ENCODE measurements at regions of chr16 and their contacts with region 1.

Region 1: DNA sequence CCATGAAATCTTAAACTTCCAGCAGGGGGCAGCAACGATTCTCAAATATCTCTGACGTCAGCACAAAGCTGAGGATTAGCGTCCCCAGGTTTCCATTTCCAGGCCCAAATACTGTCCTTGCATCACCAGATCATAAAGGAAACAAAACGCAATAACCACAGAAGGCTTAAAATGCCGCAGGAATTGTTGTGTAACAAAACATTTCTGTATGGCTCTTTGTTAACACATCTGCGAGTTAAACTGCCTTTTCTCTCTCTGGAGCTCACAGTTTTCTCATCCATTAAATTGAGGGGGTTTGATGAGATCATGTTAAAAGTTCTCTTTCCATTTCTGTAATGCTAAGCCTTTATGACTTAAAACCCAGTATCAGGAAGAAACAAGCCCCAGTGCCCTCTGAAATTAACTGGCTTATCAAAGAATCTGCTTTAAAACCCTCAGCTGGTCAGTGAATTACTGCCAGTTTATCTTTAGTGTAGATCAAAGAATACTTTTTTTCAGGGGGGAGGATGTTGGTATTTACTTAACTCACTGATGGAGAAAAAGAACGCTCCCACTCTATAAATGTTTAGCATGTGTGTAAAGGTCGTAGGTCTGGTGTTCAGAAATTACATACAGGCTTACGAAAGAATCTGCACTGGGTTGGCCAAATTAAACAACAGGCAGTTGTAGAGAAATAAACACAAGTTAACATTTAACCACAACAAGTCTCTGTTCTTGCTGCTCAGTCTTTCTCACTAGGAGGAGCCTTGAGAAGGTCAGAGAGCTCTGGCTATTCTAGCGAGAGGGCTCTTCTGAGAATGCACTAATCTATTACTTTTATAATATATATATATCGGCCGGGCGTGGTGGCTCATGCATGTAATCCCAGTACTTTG is 10.6 kb upstream of the TERF2 start:
- DNase-seq: peak; percentile 90
- H3K4me3 ChIP-seq: no peak overlapping the region
- H3K27ac ChIP-seq: peak overlapping the region; percentile 65
- H3K4me1 ChIP-seq: peaks cover 18% of the 10 kb centered on the region
- H3K27me3 ChIP-seq: no peaks in the 10 kb centered on the region
- CTCF ChIP-seq: peak; percentile 55 to 57

Region 2: DNA sequence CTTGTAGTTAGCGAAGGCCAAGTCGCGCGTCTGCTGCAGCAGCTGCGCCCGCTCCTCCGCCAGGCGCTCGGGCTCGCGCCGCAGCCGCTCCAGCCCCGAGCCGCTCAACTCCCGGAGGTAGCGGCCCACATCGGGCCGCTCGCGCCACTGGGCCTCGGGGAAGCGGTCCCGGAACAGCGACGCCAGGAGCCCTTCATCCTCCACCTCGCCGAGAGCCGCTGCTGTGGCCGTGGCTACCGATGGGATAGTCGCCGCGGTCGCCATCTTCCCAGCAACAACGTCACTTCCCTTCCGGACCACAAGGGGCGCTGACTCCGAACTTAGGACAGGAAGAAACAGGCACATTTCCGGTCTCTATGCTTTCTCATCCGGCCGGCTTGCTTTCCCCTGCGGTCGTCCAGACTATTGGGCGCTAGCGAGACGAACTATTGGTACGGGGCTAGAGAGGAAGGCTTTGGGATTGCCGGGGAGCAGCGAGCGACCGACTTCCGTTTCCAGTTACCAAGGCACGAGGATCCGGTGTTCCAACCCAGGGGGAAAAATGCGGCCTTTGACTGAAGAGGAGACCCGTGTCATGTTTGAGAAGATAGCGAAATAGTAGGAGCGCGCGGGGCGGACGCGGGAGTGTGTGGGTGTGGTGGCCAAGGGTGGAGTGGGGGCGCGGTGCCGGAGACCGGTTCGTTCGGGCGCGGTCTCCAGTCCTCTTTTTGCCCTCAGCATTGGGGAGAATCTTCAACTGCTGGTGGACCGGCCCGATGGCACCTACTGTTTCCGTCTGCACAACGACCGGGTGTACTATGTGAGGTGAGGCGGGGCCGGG is 56.9 kb before region 1 on chr16 and contains the starts of genes COG8 and NIP7:
- CTCF ChIA-PET with region 1: no interaction called
- dilution Hi-C with region 1: no loop called
- in situ Hi-C with region 1: no loop called
- intact Hi-C with region 1: no loop called
- DNase-seq: peak; percentile 98
- H3K4me3 ChIP-seq: peak within 1 kb of the TSS; percentile 85 to 92 (median 86)
- H3K27ac ChIP-seq: peak within 1 kb of the TSS; percentile 82
- H3K4me1 ChIP-seq: peaks cover 17% of the 10 kb centered on the region
- H3K27me3 ChIP-seq: no peaks in the 10 kb centered on the region
- CTCF ChIP-seq: peak; percentile 78 to 85
- total RNA-seq, gene COG8: 24.3 to 32.7 TPM
- total RNA-seq, gene NIP7: 24.8 to 43.2 TPM

Region 3: DNA sequence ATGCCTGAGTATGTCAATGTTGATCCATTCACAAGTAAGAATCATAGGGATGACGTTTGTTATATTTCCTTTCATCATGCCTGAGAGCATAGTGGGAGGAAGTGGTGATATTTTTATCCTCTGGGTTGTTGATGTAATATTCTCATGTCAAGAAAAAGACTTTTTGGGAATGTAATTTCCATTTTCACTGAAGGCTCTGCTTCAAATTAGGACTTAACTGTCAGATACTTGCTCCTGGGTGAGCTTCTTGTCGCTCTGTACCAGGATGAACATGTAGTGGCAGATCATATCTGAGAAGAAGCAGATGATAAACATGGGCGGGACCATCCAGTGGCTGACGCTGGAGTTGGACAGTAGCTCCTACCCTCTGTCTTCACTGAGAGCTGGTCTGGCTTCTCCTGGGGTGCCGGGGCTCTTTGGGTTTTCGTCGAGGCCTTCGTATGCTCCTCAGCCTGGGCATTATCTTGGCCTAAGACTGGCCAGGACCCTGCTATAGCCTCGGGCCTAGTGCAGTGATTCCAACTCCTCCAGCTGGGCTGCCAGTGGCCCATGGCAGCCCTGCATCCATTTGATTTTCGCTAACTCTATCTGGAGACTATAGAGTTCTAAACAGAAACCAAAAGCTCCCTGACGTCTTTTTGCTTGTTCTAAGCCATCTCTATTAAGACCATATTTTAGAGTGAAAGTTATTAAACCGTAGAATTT is 47.7 kb after region 1 on chr16:
- CTCF ChIA-PET with region 1: no interaction called
- dilution Hi-C with region 1: no loop called
- in situ Hi-C with region 1: no loop called
- intact Hi-C with region 1: loop called (anchors 5 kb)
- DNase-seq: peak; percentile 50
- H3K4me3 ChIP-seq: peak overlapping the region; percentile 20 to 27 (median 25)
- H3K27ac ChIP-seq: peak overlapping the region; percentile 59
- H3K4me1 ChIP-seq: peaks cover 19% of the 10 kb centered on the region
- H3K27me3 ChIP-seq: no peaks in the 10 kb centered on the region
- CTCF ChIP-seq: no peak

Region 4: DNA sequence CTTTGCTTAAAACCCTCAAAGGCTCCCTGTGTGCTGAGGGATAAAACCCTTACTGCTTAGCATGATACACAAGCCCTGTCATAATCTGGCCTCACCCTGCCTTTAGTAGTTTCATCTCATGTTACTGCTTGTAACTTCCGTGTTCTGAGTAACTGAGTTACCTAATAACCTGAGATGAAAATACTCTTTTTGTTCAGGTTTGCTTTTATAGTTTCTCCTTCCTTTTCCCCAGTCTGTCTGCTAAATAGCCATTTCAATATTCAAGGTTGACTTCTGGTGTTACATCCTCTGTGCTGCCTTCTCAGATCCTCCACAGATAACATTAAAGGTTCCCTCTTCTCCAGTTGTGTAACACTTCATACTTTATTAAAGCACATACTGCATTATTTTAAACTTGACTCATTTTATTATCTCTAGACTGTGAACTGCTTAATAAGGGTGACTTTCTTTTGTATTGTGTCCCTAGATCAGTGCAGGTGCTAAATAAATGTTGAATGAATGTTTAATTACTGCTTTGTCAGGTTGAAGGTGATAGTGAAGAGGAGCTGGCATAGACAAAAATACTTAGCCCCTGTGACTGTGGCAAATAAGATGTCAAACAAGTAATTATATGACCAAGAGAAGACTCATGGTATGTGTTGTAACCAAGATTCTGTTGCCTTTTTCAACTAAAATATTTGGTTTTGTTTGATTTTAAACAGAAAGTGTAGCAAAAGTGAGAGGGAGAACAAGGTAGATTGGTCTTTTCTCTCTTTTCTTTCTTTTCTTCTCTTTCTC is 217.1 kb after region 1 on chr16:
- CTCF ChIA-PET with region 1: no interaction called
- dilution Hi-C with region 1: no loop called
- in situ Hi-C with region 1: no loop called
- intact Hi-C with region 1: loop called (anchors 5 kb)
- DNase-seq: peak; percentile 88
- H3K4me3 ChIP-seq: peak overlapping the region in 1 of 3 experiments; percentile 3
- H3K27ac ChIP-seq: peak overlapping the region; percentile 94
- H3K4me1 ChIP-seq: peaks cover 24% of the 10 kb centered on the region
- H3K27me3 ChIP-seq: no peaks in the 10 kb centered on the region
- CTCF ChIP-seq: no peak

Region 5: GRCh38 chr16:69709456-69710084 is 313.1 kb after region 1 on chr16:
- CTCF ChIA-PET with region 1: no interaction called
- dilution Hi-C with region 1: no loop called
- in situ Hi-C with region 1: no loop called
- intact Hi-C with region 1: loop called (anchors 10 kb)
- DNase-seq: peak; percentile 60
- H3K4me3 ChIP-seq: no peak overlapping the region
- H3K27ac ChIP-seq: no peak overlapping the region
- H3K4me1 ChIP-seq: peaks cover 33% of the 10 kb centered on the region
- H3K27me3 ChIP-seq: no peaks in the 10 kb centered on the region
- CTCF ChIP-seq: peak; percentile 61 to 63